A549 (cell line): ENCODE measurements at regions of chr19 and their contacts with region 1.

Region 1: GRCh38 chr19:38142176-38143035 is 81.6 kb downstream of the DPF1 start:
- DNase-seq: peak; percentile 81 to 98
- ATAC-seq: peak; percentile 84 to 90
- H3K4me3 ChIP-seq: no peak overlapping the region
- H3K27ac ChIP-seq: no peak overlapping the region
- H3K4me1 ChIP-seq: no peaks in the 10 kb centered on the region
- CTCF ChIP-seq: peak; percentile 86
- EP300 ChIP-seq: no peak
- POLR2A ChIP-seq: no peak
- RAD21 ChIP-seq: peak; percentile 73 to 91

Region 2: DNA sequence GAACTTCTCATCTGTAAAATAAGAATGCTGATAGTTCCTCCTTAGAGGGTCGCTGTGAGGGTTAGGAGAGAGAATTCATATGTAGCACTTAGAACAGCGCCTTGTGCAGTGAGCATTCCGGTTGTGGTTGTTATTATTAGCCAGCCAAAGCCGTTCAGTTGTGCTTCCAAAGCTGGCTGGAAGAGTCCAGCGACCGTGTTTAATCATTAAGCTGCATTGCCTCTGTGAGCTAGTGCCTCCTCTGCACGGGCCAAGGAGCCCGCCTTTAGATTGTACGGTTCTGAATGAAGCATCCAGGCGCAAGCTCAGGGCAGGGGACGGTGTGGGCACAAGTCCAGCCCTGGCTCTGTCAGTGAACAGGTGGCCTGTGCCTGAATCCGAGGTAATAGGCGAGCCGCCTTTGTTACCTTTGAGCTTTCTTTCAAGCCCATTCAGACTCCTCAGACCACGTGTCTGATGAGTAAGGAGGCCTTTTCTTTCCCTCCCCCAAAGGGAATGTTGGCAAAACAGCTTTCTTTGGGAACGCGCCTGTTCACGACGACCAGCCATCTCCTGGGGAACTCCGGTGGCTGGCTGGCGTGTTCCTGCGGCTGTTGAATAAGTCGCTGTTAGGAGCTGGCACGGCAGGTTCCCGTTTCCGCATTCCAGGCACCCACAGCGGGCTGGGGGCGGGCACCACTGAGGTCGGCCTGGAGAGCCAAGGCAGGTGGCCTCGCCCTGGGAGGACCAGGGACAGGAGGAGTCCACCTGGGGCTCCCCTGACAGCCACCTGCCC is 210.3 kb before region 1 on chr19:
- CTCF ChIA-PET with region 1: interaction called, 10 read pairs
- POLR2A ChIA-PET with region 1: no interaction called
- DNase-seq: peak; percentile 96 to 97
- ATAC-seq: peak; percentile 72 to 86
- H3K4me3 ChIP-seq: peak overlapping the region; percentile 51
- H3K27ac ChIP-seq: peak overlapping the region; percentile 88 to 95
- H3K4me1 ChIP-seq: peaks cover 61% of the 10 kb centered on the region
- CTCF ChIP-seq: no peak
- EP300 ChIP-seq: peak in 1 of 2 experiments; percentile 63; a peak in 1 of 5 replicates
- POLR2A ChIP-seq: peak; percentile 66
- RAD21 ChIP-seq: peak; percentile 22 to 46

Region 3: DNA sequence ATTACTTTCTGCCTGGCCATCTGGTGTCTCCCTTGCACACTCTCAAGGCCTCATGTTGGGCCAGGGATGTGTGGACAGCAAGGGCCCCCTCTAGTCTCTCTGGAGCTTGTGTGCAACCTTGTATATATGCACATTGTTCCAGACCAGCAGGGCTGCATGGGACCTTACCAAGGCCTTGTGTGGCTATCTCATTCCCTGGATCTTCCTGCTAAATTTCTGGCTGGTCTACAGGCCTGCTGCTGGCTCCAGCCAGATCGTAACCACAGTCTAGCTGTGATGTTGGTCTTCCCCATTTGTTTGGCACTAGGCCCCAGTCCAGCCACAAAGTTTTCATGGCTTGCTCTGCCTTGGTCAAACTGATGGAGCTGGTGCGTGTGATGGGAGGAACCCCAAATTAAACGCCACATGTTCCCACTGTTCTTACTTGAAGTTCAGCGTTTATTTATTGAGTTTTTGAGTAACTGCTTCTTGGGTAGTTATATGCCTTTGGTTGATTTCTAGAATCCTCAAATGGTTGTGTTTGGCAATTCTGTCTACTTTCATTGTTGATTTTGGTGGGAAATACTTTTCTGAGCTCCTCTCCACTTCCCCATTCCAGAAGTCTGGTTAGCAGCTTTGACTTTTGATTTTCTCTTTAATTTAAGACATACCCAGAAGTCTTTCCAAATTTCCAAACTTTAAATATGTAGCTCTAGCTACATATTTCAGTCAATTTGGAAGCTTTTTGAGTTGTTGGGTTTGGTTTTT is 179.0 kb before region 1 on chr19:
- CTCF ChIA-PET with region 1: no interaction called
- POLR2A ChIA-PET with region 1: no interaction called
- DNase-seq: no peak
- ATAC-seq: peak; percentile 39 to 62; a peak in 4 of 6 replicates
- H3K4me3 ChIP-seq: no peak overlapping the region
- H3K27ac ChIP-seq: peak overlapping the region in 1 of 2 experiments; percentile 36; a peak in 2 of 6 replicates
- H3K4me1 ChIP-seq: peaks cover 27% of the 10 kb centered on the region
- CTCF ChIP-seq: no peak
- EP300 ChIP-seq: no peak
- POLR2A ChIP-seq: no peak
- RAD21 ChIP-seq: no peak

Region 4: DNA sequence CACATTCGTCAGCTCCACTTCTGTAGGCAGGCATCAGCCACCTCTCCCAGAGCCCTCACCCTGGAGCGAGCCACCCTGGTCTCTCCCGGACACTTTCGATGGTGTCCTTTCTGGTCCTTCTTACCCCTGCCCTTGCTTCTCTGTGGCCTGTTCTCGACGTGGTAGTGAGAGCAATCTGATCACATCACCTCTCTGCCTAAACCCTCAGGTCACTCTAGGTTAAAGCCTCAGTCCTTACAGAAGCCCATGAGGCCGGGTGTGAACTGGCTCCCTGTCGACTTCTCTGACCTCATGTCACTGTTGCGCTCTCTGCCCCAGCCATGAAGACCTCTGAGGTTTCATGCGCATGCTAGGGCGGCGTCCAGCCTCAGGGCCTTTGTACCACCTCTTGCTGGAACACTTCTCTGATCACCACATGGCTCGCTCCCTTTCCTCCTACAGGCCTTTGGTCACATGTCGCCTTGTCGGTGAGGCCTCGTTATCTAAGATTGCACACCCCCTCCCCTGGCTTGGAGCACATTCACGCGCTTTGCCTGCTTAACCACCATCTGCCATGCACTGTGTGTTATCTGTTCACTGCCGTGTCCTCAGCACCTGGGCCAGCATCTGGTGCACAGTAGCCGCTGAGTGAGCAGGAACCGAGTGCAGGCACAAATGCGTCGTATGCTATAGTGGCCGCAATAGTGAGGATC is 19.9 kb before region 1 on chr19:
- CTCF ChIA-PET with region 1: interaction called, 12 read pairs
- POLR2A ChIA-PET with region 1: no interaction called
- DNase-seq: no peak
- ATAC-seq: peak; percentile 30 to 52
- H3K4me3 ChIP-seq: no peak overlapping the region
- H3K27ac ChIP-seq: no peak overlapping the region
- H3K4me1 ChIP-seq: no peaks in the 10 kb centered on the region
- CTCF ChIP-seq: no peak
- EP300 ChIP-seq: no peak
- POLR2A ChIP-seq: no peak
- RAD21 ChIP-seq: no peak

Region 5: GRCh38 chr19:38173291-38174041 is 31.1 kb after region 1 on chr19:
- CTCF ChIA-PET with region 1: interaction called, 10 read pairs
- POLR2A ChIA-PET with region 1: no interaction called
- DNase-seq: no peak
- ATAC-seq: peak; percentile 9 to 20; a peak in 3 of 6 replicates
- H3K4me3 ChIP-seq: no peak overlapping the region
- H3K27ac ChIP-seq: no peak overlapping the region
- H3K4me1 ChIP-seq: no peaks in the 10 kb centered on the region
- CTCF ChIP-seq: no peak
- EP300 ChIP-seq: no peak
- POLR2A ChIP-seq: no peak
- RAD21 ChIP-seq: no peak

Region 6: GRCh38 chr19:38250821-38251563 is 108.6 kb after region 1 on chr19:
- CTCF ChIA-PET with region 1: interaction called, 11 read pairs
- POLR2A ChIA-PET with region 1: no interaction called
- DNase-seq: no peak
- ATAC-seq: no peak
- H3K4me3 ChIP-seq: no peak overlapping the region
- H3K27ac ChIP-seq: peak overlapping the region in 1 of 2 experiments; percentile 39; a peak in 3 of 6 replicates
- H3K4me1 ChIP-seq: peaks cover 34% of the 10 kb centered on the region
- CTCF ChIP-seq: no peak
- EP300 ChIP-seq: no peak
- POLR2A ChIP-seq: no peak
- RAD21 ChIP-seq: no peak

Region 7: DNA sequence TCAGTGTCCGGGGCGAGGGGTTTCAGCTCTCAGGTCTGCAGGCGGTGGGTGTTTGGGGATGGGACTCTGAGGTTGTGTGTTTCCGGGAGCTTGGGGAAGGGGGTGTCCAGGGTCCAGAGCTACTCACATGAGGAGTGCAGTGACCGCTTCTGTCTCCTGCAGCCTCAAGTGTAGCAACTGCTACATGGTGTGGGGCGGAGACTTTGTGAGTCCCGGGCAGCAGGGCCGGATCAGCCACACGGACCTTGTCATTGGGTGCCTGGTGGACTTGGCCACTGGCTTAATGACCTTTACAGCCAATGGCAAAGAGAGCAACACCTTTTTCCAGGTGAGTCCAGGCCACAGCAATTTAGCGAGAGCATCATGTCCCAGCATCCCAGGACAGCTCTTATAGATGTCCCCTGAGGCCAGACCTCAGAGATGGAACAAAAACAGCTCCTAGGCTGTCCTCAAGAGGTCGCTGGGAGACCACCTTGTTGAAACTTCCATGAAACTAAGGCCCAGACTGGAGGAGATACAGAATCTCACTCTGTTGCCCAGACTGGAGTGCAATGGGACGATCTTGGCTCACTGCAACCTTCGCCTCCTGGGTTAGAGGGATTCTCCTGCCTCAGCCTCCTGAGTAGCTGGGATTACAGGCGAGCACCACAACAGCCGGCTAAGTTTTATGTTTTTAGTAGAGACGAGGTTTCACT is 336.0 kb after region 1 on chr19:
- CTCF ChIA-PET with region 1: no interaction called
- POLR2A ChIA-PET with region 1: no interaction called
- DNase-seq: peak; percentile 79 to 90
- ATAC-seq: peak; percentile 83 to 91
- H3K4me3 ChIP-seq: no peak overlapping the region
- H3K27ac ChIP-seq: no peak overlapping the region
- H3K4me1 ChIP-seq: no peaks in the 10 kb centered on the region
- CTCF ChIP-seq: peak; percentile 65
- EP300 ChIP-seq: no peak
- POLR2A ChIP-seq: no peak
- RAD21 ChIP-seq: peak; percentile 75 to 92